ENCODE measurements at regions of chr17 and their contacts with region 1.

Region 1: GRCh38 chr17:75319904-75320691 is 30.9 kb upstream of the SLC25A19 start:
- DNase-seq: no peak
- H3K4me3 ChIP-seq: no peak overlapping the region
- H3K27ac ChIP-seq: no peak overlapping the region
- H3K4me1 ChIP-seq: peaks cover 4 to 12% of the 10 kb centered on the region in 2 donors
- H3K27me3 ChIP-seq: no peaks in the 10 kb centered on the region
- CTCF ChIP-seq: no peak
- POLR2A ChIP-seq: no peak

Region 2: GRCh38 chr17:75250009-75250471 is 70.1 kb before region 1 on chr17:
- intact Hi-C with region 1: no loop called
- DNase-seq: peak in 2 of 7 donors; percentile 22 to 44
- H3K4me3 ChIP-seq: no peak overlapping the region
- H3K27ac ChIP-seq: peak overlapping the region in 2 of 5 donors; percentile 52 to 62
- H3K4me1 ChIP-seq: peaks cover 0 to 13% of the 10 kb centered on the region in 2 donors
- H3K27me3 ChIP-seq: no peaks in the 10 kb centered on the region
- CTCF ChIP-seq: no peak
- POLR2A ChIP-seq: no peak

Region 3: GRCh38 chr17:75412455-75413317 is 92.6 kb after region 1 on chr17:
- intact Hi-C with region 1: loop called (anchors 5 kb)
- DNase-seq: peak; percentile 45 to 89 (median 71)
- H3K4me3 ChIP-seq: peak overlapping the region in 1 of 4 donors; percentile 6
- H3K27ac ChIP-seq: no peak overlapping the region
- H3K4me1 ChIP-seq: peaks cover 0 to 11% of the 10 kb centered on the region in 2 donors
- H3K27me3 ChIP-seq: no peaks in the 10 kb centered on the region
- CTCF ChIP-seq: peak; percentile 52 to 89 (median 80)
- POLR2A ChIP-seq: no peak